H1 (cell line): ENCODE measurements at regions of chr5 and their contacts with region 1.

Region 1: GRCh38 chr5:178182158-178182876 is 4.9 kb downstream of the GMCL2 start:
- DNase-seq: no peak
- H3K4me3 ChIP-seq: no peak overlapping the region
- H3K27ac ChIP-seq: peak overlapping the region; percentile 15; the same call in 1 of the 2 replicates
- H3K4me1 ChIP-seq: peaks cover 2 to 25% (median 16%) of the 10 kb centered on the region in 4 experiments; a peak in 6 of 7 replicates
- H3K27me3 ChIP-seq: no peaks in the 10 kb centered on the region
- CTCF ChIP-seq: no peak
- EP300 ChIP-seq: no peak
- POLR2A ChIP-seq: no peak
- RAD21 ChIP-seq: no peak

Region 2: DNA sequence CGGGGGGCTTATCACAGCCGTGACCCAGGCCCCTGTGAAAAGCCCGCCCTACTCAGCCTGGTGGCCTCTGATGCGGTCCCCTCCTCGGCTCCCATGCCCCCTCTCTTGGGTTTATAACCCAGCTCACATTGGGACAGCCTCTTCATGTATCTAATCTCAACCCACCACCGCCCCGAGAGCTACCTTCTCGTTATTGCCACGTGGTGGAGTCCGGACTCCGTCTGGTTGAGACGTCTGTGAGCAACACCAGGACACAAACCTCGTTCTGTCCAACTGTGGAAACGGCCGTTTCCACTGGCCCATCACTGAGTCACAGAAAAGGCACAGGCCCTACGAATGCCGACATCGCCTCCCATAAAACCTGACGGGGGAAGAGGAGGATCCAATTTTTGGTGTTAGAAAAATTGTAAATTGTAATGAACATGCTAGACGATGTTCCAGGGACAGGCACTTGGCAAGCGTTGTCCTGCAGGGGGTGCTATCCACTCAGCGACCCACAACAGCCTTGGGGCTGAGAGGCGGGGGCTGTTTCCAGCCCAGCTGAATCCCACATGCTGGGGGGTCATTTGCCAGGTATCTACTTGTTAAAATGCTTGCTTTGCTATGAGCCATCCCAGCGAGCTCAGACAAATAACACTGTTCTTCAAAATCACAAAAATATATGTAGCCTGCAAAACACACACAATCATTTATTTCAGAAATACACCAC is 106.3 kb before region 1 on chr5:
- CTCF ChIA-PET with region 1: interaction called, 21 read pairs
- POLR2A ChIA-PET with region 1: interaction called, 8 read pairs
- DNase-seq: peak; percentile 50 to 92
- H3K4me3 ChIP-seq: peak overlapping the region in 1 of 4 experiments; percentile 33; a peak in 2 of 8 replicates
- H3K27ac ChIP-seq: no peak overlapping the region
- H3K4me1 ChIP-seq: peaks cover 0 to 12% (median 4%) of the 10 kb centered on the region in 4 experiments; a peak in 2 of 7 replicates
- H3K27me3 ChIP-seq: peaks cover 0 to 11% (median 6%) of the 10 kb centered on the region in 4 experiments; a peak in 3 of 7 replicates
- CTCF ChIP-seq: peak in 2 of 3 experiments; percentile 87 to 93; a peak in 3 of 4 replicates
- EP300 ChIP-seq: no peak
- POLR2A ChIP-seq: no peak
- RAD21 ChIP-seq: peak; percentile 94 to 96

Region 3: GRCh38 chr5:178120868-178121357 is 61.4 kb before region 1 on chr5:
- CTCF ChIA-PET with region 1: interaction called, 4 read pairs
- POLR2A ChIA-PET with region 1: interaction called, 16 read pairs
- DNase-seq: peak; percentile 41 to 77
- H3K4me3 ChIP-seq: no peak overlapping the region
- H3K27ac ChIP-seq: no peak overlapping the region; the same call in 1 of the 2 replicates
- H3K4me1 ChIP-seq: peaks cover 11 to 64% (median 37%) of the 10 kb centered on the region in 4 experiments
- H3K27me3 ChIP-seq: no peaks in the 10 kb centered on the region
- CTCF ChIP-seq: peak in 2 of 3 experiments; percentile 74 to 88; a peak in 3 of 4 replicates
- EP300 ChIP-seq: no peak
- POLR2A ChIP-seq: no peak; a peak in 1 of 3 replicates
- RAD21 ChIP-seq: peak; percentile 38 to 61

Region 4: GRCh38 chr5:178137991-178138390 is 44.3 kb before region 1 on chr5:
- CTCF ChIA-PET with region 1: no interaction called
- POLR2A ChIA-PET with region 1: interaction called, 11 read pairs
- DNase-seq: no peak
- H3K4me3 ChIP-seq: no peak overlapping the region
- H3K27ac ChIP-seq: no peak overlapping the region
- H3K4me1 ChIP-seq: no peaks in the 10 kb centered on the region; a peak in 1 of 7 replicates
- H3K27me3 ChIP-seq: no peaks in the 10 kb centered on the region
- CTCF ChIP-seq: no peak
- EP300 ChIP-seq: no peak
- POLR2A ChIP-seq: 0 out of 3 replicates have a peak, but pooled peaks of 1 of the 2 experiments have one; percentile 26
- RAD21 ChIP-seq: no peak

Region 5: GRCh38 chr5:178163772-178164735 is 18.3 kb before region 1 on chr5:
- CTCF ChIA-PET with region 1: interaction called, 14 read pairs
- POLR2A ChIA-PET with region 1: interaction called, 21 read pairs
- DNase-seq: peak in 1 of 2 experiments; percentile 100
- H3K4me3 ChIP-seq: peak overlapping the region in 3 of 4 experiments; percentile 37 to 49 (median 48); a peak in 6 of 8 replicates
- H3K27ac ChIP-seq: no peak overlapping the region
- H3K4me1 ChIP-seq: peaks cover 0 to 6% (median 3%) of the 10 kb centered on the region in 4 experiments; a peak in 3 of 7 replicates
- H3K27me3 ChIP-seq: peaks cover 0 to 4% (median 2%) of the 10 kb centered on the region in 4 experiments; a peak in 1 of 7 replicates
- CTCF ChIP-seq: peak; percentile 94 to 100 (median 100)
- EP300 ChIP-seq: no peak
- POLR2A ChIP-seq: 0 out of 3 replicates have a peak, but pooled peaks of 1 of the 2 experiments have one; percentile 22
- RAD21 ChIP-seq: peak; percentile 96 to 98

Region 6: DNA sequence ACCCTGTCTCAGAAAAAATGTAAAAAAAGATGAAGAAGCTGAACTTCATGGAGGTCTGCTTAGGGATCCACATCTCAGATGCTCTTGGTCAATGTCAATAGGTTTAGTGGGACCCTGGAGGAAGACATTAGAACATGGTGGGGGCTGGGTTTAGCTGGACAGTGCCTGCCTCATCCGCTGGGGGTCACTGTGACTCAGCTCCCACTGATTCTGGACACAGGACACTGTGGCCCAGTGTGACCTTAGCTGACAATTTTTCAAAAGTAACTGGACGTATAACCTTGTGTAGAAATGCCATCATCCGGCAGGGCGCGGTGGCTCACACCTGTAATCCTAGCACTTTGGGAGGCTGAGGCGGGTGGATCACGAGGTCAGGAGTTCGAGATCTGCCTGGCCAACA is 14.7 kb after region 1 on chr5:
- CTCF ChIA-PET with region 1: interaction called, 54 read pairs
- POLR2A ChIA-PET with region 1: interaction called, 985 read pairs
- DNase-seq: peak in 1 of 2 experiments; percentile 67
- H3K4me3 ChIP-seq: no peak overlapping the region
- H3K27ac ChIP-seq: no peak overlapping the region
- H3K4me1 ChIP-seq: peaks cover 0 to 10% (median 3%) of the 10 kb centered on the region in 4 experiments; a peak in 3 of 7 replicates
- H3K27me3 ChIP-seq: no peaks in the 10 kb centered on the region; a peak in 1 of 7 replicates
- CTCF ChIP-seq: peak; percentile 49 to 89 (median 79)
- EP300 ChIP-seq: no peak
- POLR2A ChIP-seq: no peak
- RAD21 ChIP-seq: peak; percentile 15 to 53; a peak in 3 of 4 replicates

Region 7: DNA sequence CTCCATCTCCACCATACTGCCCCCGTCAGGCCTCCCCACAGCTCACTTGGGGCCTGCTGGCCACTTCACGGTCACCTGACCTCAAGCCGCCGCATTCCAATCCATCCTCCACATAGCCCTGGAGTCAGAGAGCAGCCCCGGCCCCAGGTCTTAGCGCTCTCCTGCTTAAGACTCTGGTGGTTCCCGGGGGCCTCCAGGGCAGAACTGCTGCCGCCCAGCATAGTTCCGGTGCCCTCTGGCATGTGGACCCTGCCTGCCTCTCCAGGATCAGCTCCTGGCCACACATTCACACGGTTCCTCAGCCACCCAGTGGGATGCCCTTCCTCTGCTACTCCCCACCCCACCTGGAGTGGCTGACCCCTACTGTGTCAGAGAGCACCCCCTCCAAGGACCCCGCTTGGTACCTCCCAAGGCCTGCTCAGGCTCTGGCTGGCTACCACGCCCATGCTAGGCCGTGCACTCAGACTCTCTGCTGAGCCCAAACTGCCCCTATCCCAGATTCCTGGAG is 41.6 kb after region 1 on chr5:
- CTCF ChIA-PET with region 1: interaction called, 4 read pairs
- POLR2A ChIA-PET with region 1: interaction called, 18 read pairs
- DNase-seq: no peak
- H3K4me3 ChIP-seq: no peak overlapping the region; a peak in 2 of 8 replicates
- H3K27ac ChIP-seq: no peak overlapping the region
- H3K4me1 ChIP-seq: peaks cover 0 to 15% (median 9%) of the 10 kb centered on the region in 4 experiments; a peak in 6 of 7 replicates
- H3K27me3 ChIP-seq: no peaks in the 10 kb centered on the region
- CTCF ChIP-seq: no peak
- EP300 ChIP-seq: no peak
- POLR2A ChIP-seq: no peak
- RAD21 ChIP-seq: peak in 1 of 2 experiments; percentile 11; a peak in 2 of 4 replicates